Activated naive CD4-positive, alpha-beta T cell treated with anti-CD3 and anti-CD28 coated beads for 36 hours (primary cell): ENCODE measurements at regions of chrX and their contacts with region 1.

Region 1: DNA sequence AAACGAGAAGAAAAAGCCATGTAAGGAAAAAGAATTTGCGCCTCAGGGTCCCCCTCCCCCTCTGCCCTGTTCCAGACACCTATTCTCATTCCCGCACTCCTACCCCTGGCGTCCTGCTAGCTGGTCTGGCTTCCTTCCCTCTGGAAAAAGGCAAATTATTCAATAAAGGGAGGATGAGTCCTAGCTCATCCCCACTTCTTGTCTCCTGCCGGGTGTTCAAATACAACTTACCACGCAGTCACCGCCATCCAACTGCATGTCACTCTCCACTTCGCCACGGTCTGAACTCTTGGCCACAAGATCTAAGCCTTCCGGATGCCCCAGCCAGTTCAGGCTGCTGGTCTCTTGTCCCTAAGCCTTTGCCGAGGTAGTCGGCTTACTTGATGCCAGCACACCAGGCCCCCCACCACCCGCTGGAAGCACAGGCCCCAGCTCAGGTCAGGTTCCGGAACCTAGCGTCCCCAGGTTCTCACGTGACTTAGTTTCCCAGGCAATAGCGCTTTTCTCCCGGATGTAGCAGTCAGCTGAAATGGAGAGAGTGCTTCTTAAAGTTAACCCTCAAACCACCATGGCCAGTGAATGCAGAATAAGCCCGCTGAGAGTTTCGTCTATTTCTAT is 209.6 kb upstream of the SPIN4 start:
- DNase-seq: peak; percentile 70
- H3K4me3 Mint-ChIP-seq: peak overlapping the region; percentile 98
- H3K27ac Mint-ChIP-seq: peak overlapping the region; percentile 88
- H3K4me1 Mint-ChIP-seq: peaks cover 14% of the 10 kb centered on the region
- H3K27me3 Mint-ChIP-seq: no peaks in the 10 kb centered on the region

Region 2: GRCh38 chrX:63350941-63351616 is 209.6 kb before region 1 on chrX and contains the start of gene SPIN4:
- CTCF ChIA-PET with region 1: no interaction called
- intact Hi-C with region 1: loop called (anchors 1 kb)
- DNase-seq: peak; percentile 68
- H3K4me3 Mint-ChIP-seq: peak within 1 kb of the TSS; percentile 79
- H3K27ac Mint-ChIP-seq: peak within 1 kb of the TSS; percentile 72
- H3K4me1 Mint-ChIP-seq: peaks cover 13% of the 10 kb centered on the region
- H3K27me3 Mint-ChIP-seq: no peaks in the 10 kb centered on the region
- total RNA-seq, gene SPIN4: 3.1 to 3.7 TPM

Region 3: GRCh38 chrX:63466690-63467089 is 94.0 kb before region 1 on chrX:
- CTCF ChIA-PET with region 1: no interaction called
- intact Hi-C with region 1: no loop called
- DNase-seq: no peak
- H3K4me3 Mint-ChIP-seq: no peak overlapping the region
- H3K27ac Mint-ChIP-seq: no peak overlapping the region
- H3K4me1 Mint-ChIP-seq: no peaks in the 10 kb centered on the region
- H3K27me3 Mint-ChIP-seq: no peaks in the 10 kb centered on the region

Region 4: DNA sequence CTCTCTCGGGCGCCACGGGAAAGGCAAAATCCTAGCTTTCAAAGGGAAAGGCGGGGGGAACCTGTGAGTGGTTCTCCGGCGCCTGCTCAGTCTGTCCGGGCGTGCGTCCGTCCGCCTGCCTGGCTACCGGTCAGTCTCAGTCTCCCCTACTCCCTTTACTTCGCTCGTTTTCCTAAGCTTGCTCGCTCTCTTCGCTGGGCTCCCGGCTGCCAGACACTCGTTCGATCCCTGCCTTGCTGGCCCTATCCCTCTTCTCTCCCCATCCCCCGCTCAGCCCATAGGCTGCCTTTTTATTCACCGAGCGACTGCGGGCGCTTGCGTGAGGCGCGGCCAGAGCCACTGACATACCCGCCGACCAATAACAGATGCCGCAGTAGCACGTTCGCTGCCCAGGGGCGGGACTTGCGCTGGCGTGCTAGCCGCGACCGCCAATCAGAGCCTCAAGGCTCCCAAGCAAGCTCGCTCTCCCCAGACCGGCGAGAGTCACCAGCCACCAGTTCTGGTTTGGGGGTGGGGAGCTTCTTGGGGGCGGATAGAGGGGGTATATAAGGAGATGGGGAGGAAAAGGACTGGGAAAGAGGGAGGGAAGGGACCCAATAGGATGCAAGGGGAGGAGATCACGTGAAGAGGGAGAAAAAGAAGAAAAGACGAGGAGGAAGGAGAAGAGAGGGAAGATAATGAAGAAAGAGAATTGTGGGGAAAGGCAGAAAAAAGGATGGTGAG is 194.3 kb after region 1 on chrX:
- CTCF ChIA-PET with region 1: no interaction called
- intact Hi-C with region 1: loop called (anchors 2 kb)
- DNase-seq: peak; percentile 90
- H3K4me3 Mint-ChIP-seq: peak overlapping the region; percentile 90
- H3K27ac Mint-ChIP-seq: peak overlapping the region; percentile 96
- H3K4me1 Mint-ChIP-seq: peaks cover 29% of the 10 kb centered on the region
- H3K27me3 Mint-ChIP-seq: no peaks in the 10 kb centered on the region

Region 5: GRCh38 chrX:64394874-64395567 is 834.3 kb after region 1 on chrX and contains the start of gene MTMR8:
- CTCF ChIA-PET with region 1: no interaction called
- intact Hi-C with region 1: loop called (anchors 5 kb)
- DNase-seq: peak; percentile 88
- H3K4me3 Mint-ChIP-seq: peak within 1 kb of the TSS; percentile 89
- H3K27ac Mint-ChIP-seq: peak within 1 kb of the TSS; percentile 75
- H3K4me1 Mint-ChIP-seq: peaks cover 17% of the 10 kb centered on the region
- H3K27me3 Mint-ChIP-seq: no peaks in the 10 kb centered on the region
- total RNA-seq, gene MTMR8: 3.5 to 6.4 TPM

Region 6: GRCh38 chrX:65534450-65535292 is 1974.0 kb after region 1 on chrX and contains the start of gene LAS1L:
- CTCF ChIA-PET with region 1: no interaction called
- intact Hi-C with region 1: loop called (anchors 5 kb)
- DNase-seq: peak; percentile 93
- H3K4me3 Mint-ChIP-seq: peak within 1 kb of the TSS; percentile 96
- H3K27ac Mint-ChIP-seq: peak within 1 kb of the TSS; percentile 89
- H3K4me1 Mint-ChIP-seq: peaks cover 16% of the 10 kb centered on the region
- H3K27me3 Mint-ChIP-seq: no peaks in the 10 kb centered on the region
- total RNA-seq, gene LAS1L: 60.4 to 61.1 TPM